Posterior cingulate gyrus (tissue), 11 donors: ENCODE measurements at regions of chr1 and their contacts with region 1.

Region 1: GRCh38 chr1:232950197-232951176 is at the start of gene NTPCR:
- DNase-seq: peak; percentile 84 to 98 (median 90)

Region 2: GRCh38 chr1:232805269-232806185 is 145.0 kb before region 1 on chr1 and contains the start of gene MAP10:
- intact Hi-C with region 1: loop called (anchors 10 kb)
- DNase-seq: peak; percentile 39 to 96 (median 73)